ENCODE measurements at regions of chr20 and their contacts with region 1.

Region 1: GRCh38 chr20:25178563-25179438 is 16.7 kb upstream of the ENTPD6 start:
- DNase-seq: peak; percentile 32 to 47 (median 44)
- H3K4me3 ChIP-seq: no peak overlapping the region
- H3K4me3 Mint-ChIP-seq: no peak overlapping the region
- H3K27ac ChIP-seq: no peak overlapping the region
- H3K27ac Mint-ChIP-seq: peak overlapping the region in 2 of 7 donors; percentile 69 to 78
- H3K4me1 ChIP-seq: no peaks in the 10 kb centered on the region
- H3K4me1 Mint-ChIP-seq: peaks cover 0 to 2% (median under 1%) of the 10 kb centered on the region in 4 donors
- H3K27me3 ChIP-seq: no peaks in the 10 kb centered on the region
- H3K27me3 Mint-ChIP-seq: peaks cover 4 to 6% of the 10 kb centered on the region in 2 donors

Region 2: DNA sequence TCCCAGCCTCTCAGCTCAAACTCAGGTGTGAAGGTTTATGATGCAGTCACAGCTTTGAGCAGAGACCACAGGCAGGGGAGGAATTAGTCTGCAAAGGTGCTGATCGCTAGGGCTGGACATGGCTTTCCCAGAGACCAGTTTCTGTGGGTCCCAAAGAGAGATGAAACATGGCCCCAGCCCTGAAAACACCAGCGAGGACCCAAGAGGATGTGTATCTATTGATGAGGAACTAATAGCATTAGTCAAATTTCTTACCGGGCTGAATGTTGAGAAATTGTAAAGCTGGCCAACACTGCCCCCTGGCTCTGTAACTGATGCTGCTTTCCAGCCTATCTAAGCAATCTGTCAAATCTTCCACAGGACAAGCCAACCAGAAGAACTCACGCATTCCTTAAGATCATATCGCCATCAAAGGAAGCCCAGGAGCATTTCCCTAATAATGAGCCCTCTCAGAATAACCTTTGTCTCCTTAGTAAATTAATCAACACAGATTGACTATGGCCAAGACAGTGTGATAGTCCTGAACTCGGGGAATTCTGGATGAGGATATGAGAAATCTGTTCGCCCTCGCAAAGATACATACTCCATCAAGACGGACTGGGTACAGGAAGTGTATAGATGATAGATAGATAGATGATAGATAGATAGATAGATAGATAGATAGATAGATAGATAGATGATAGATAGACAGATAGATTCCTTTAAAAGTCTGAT is 113.0 kb before region 1 on chr20:
- CTCF ChIA-PET with region 1: interaction called, 12 read pairs
- POLR2A ChIA-PET with region 1: no interaction called
- intact Hi-C with region 1: loop called (anchors 1 kb)
- DNase-seq: peak; percentile 66 to 70 (median 67)
- H3K4me3 ChIP-seq: no peak overlapping the region
- H3K4me3 Mint-ChIP-seq: no peak overlapping the region
- H3K27ac ChIP-seq: no peak overlapping the region
- H3K27ac Mint-ChIP-seq: peak overlapping the region in 2 of 7 donors; percentile 4 to 26
- H3K4me1 ChIP-seq: no peaks in the 10 kb centered on the region
- H3K4me1 Mint-ChIP-seq: peaks cover 4 to 8% (median 5%) of the 10 kb centered on the region in 4 donors
- H3K27me3 ChIP-seq: peaks cover 7% of the 10 kb centered on the region
- H3K27me3 Mint-ChIP-seq: peaks cover 16 to 18% of the 10 kb centered on the region in 2 donors

Region 3: DNA sequence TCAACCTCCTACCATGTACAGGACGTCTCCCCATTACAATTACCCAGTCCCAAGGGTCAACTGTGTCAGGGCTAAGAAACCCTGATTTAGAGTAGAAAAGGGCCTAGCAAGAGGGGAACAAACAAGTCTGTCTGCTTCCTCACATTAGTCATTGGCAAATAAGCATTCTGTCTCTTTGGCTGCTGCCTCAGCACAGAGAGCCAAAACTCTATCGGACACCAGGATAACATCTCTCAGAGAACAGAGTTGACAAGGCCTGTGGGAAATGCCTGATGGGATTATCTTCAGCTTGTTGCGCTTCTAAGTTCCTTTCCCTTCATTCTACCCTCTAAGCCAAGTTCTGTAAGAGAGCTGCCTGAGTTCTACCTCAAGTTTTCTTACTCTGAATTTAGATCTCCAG is 77.9 kb before region 1 on chr20:
- CTCF ChIA-PET with region 1: no interaction called
- POLR2A ChIA-PET with region 1: no interaction called
- intact Hi-C with region 1: no loop called
- DNase-seq: no peak
- H3K4me3 ChIP-seq: no peak overlapping the region
- H3K4me3 Mint-ChIP-seq: no peak overlapping the region
- H3K27ac ChIP-seq: no peak overlapping the region
- H3K27ac Mint-ChIP-seq: no peak overlapping the region
- H3K4me1 ChIP-seq: peaks cover 7% of the 10 kb centered on the region
- H3K4me1 Mint-ChIP-seq: peaks cover 7 to 11% (median 8%) of the 10 kb centered on the region in 4 donors
- H3K27me3 ChIP-seq: no peaks in the 10 kb centered on the region
- H3K27me3 Mint-ChIP-seq: peaks cover 4 to 5% of the 10 kb centered on the region in 2 donors